Prostate gland (tissue), 2 donors: ENCODE measurements at regions of chr17 and their contacts with region 1.

Region 1: DNA sequence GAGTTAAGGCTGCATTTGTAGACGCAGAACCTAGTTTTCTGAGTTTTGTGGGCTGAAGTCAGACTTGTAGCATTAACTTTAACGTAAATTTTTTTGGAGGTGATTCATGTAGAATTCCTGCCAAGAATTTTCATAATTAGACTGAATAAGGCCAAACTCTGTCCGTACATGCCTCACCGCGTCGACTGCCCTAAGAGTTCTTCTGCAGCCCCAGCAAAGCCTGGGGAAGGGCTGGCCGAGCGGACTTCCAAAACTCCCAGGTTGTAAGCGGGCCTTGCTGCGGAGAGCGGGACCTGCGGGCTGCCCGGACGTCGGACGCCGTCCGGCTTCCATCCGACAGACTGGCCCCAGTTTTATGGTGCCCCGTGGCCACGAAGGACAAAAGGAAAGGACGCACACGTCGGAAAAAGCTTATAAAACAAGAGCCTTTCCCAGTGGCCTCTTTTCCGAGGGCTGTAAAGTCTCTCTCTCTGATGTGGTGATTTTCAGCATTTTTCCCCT is 75.5 kb downstream of the NXN start:
- DNase-seq: peak; percentile 61
- H3K4me3 ChIP-seq: no peak overlapping the region
- H3K27ac ChIP-seq: peak overlapping the region; percentile 68 to 73
- H3K4me1 ChIP-seq: no peaks in the 10 kb centered on the region
- H3K27me3 ChIP-seq: no peaks in the 10 kb centered on the region
- CTCF ChIP-seq: no peak
- POLR2A ChIP-seq: no peak

Region 2: GRCh38 chr17:661509-661908 is 242.5 kb before region 1 on chr17:
- intact Hi-C with region 1: no loop called
- DNase-seq: no peak
- H3K4me3 ChIP-seq: no peak overlapping the region
- H3K27ac ChIP-seq: no peak overlapping the region
- H3K4me1 ChIP-seq: no peaks in the 10 kb centered on the region
- H3K27me3 ChIP-seq: no peaks in the 10 kb centered on the region
- CTCF ChIP-seq: no peak
- POLR2A ChIP-seq: no peak

Region 3: DNA sequence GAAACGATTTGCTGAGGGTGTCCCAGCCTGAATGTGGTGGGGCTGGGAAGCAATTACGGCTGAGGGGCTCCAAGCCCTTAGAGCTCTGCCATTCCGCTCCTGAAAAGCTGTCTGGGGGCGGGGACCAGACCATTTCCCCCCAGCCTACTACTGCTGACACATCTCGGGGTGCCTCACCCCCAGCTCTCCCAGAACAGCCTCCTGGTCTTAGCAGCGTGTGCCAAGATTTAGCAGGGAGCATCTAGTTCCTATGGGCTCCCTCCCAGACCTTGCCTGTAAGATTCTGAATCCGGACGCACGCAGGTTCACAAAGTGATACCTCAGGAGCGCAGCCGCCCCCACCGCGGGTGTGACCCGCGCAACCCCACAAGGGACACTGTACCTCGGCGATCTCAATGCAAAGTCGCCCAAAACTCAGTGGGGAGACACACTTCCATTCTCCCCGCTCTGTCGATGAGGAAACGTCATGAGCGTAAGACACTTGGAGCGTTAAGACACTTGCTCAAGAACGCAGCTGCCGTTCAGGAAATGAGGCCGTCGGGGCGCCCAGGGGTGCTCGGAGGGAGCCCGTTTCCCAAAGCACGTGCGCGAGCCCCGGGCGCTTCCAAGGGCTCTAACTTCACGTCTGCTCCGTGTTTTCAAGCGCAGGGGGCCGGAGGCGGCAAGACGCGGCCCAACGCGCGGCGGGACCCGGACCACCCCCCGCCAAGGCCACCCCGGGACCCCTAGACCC is 152.6 kb before region 1 on chr17:
- intact Hi-C with region 1: no loop called
- DNase-seq: no peak
- H3K4me3 ChIP-seq: peak overlapping the region; percentile 77 to 83
- H3K27ac ChIP-seq: peak overlapping the region; percentile 88 to 92
- H3K4me1 ChIP-seq: no peaks in the 10 kb centered on the region
- H3K27me3 ChIP-seq: no peaks in the 10 kb centered on the region
- CTCF ChIP-seq: no peak
- POLR2A ChIP-seq: no peak

Region 4: DNA sequence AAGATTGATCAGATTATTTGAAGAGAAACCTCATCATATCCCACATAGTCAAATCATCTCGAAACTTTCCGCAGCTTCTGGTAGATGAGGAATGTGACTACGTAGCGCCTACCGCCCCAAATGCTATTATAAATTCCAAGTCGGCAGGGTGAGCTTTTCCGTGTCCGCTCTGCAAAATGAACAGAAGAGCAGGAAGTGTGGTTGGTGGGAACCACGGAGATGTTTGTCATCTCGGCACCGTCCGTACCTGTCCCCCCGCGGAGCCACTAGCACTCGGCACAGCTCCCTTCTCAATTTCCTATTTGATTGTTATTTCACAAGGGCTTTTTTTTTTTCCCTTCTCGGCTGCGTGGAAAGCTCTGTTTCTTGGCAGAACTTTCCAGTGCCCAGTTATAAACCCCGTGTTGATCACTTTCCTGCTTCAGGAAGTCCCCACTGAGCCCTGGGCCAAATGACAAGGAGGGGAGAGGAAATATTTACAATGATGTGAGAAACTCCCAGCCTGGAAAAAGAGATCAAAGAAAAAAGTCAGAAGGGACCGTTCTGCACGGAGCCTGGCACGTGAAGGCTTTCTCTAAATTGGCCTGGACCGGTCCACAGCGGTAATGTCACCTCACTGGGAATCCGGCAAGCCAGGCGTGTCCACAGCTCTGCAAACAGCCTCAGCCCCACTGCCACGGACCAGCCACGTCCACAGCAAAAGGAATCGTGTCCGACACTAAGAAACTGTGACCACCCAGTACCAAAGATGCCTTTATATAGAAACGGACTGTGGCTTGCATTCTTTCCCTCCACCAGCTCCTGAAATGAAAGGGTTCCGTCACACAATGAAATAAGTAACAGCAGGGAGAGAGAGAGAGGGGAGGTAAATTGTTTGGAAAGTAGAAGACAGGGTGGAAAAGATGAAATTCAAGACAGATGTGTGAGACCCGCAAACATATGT is 56.9 kb before region 1 on chr17:
- intact Hi-C with region 1: no loop called
- DNase-seq: peak; percentile 50
- H3K4me3 ChIP-seq: peak overlapping the region; percentile 15 to 19
- H3K27ac ChIP-seq: peak overlapping the region; percentile 72 to 77
- H3K4me1 ChIP-seq: peaks cover 11% of the 10 kb centered on the region
- H3K27me3 ChIP-seq: no peaks in the 10 kb centered on the region
- CTCF ChIP-seq: no peak
- POLR2A ChIP-seq: no peak

Region 5: GRCh38 chr17:885971-886571 is 18.0 kb before region 1 on chr17:
- intact Hi-C with region 1: loop called (anchors 2 kb)
- DNase-seq: peak; percentile 86
- H3K4me3 ChIP-seq: no peak overlapping the region
- H3K27ac ChIP-seq: peak overlapping the region; percentile 78 to 84
- H3K4me1 ChIP-seq: peaks cover 20% of the 10 kb centered on the region
- H3K27me3 ChIP-seq: no peaks in the 10 kb centered on the region
- CTCF ChIP-seq: no peak
- POLR2A ChIP-seq: no peak